ENCODE measurements at regions of chr2 and their contacts with region 1.

Region 1: DNA sequence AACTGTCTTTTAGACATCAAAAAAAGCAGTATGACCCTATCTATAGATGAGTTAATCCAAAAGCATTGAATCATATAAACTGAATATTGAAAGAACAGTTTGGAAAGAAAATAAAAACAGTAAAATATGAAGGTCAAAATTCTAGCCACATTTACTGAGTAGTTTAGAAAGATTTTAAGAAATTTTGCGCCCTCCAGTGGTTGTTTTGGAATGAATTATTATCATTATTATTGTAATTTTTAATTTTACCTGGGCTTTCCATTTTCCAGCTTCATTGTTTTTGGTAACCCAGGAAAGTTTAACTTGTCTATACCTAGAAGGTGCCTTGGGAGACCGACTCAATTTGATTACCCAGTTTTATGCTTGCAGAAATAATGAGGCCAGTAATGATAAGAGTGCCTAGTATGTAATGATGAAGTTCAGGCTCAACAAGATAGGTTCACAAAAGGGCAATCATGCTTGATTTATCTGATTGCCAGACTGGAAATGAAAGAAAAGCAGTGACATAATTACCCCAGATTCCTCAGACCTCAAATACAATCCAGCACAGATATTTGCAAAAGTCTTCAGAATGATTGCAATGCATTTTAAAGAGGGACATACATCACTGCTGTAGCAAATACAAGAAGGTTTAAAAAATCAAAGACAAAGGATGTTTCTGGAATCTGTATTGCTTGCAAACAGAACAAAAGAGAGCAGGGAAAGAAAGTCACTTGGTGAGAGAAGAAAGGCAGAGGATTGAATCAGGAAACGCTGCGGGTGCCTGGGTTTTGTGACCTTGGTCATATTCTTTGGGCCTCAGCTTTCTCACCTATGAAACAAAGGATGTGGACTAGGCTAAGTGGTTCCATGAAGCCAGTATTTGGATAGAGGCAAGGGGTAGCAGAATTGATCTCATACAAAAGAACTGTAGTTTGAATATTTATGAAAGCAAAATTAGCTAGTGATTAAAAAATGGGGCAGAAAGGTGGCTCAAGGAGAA is 153.8 kb downstream of the MAP2 start:
- DNase-seq: no peak
- H3K4me3 ChIP-seq: no peak overlapping the region
- H3K4me3 Mint-ChIP-seq: no peak overlapping the region
- H3K27ac ChIP-seq: no peak overlapping the region
- H3K27ac Mint-ChIP-seq: no peak overlapping the region
- H3K4me1 ChIP-seq: no peaks in the 10 kb centered on the region
- H3K4me1 Mint-ChIP-seq: peaks cover 8% of the 10 kb centered on the region
- H3K27me3 ChIP-seq: no peaks in the 10 kb centered on the region
- H3K27me3 Mint-ChIP-seq: peaks cover 1 to 8% (median 4%) of the 10 kb centered on the region in 3 donors
- CTCF ChIP-seq: peak; percentile 72

Region 2: GRCh38 chr2:209334198-209335017 is 243.3 kb before region 1 on chr2:
- intact Hi-C with region 1: loop called in 1 of 2 experiments (anchors 10 kb)
- DNase-seq: peak in 2 of 3 donors; percentile 13 to 23
- H3K4me3 ChIP-seq: no peak overlapping the region
- H3K4me3 Mint-ChIP-seq: no peak overlapping the region
- H3K27ac ChIP-seq: no peak overlapping the region
- H3K27ac Mint-ChIP-seq: no peak overlapping the region
- H3K4me1 ChIP-seq: no peaks in the 10 kb centered on the region
- H3K4me1 Mint-ChIP-seq: no peaks in the 10 kb centered on the region
- H3K27me3 ChIP-seq: peaks cover 0 to 2% of the 10 kb centered on the region in 2 donors
- H3K27me3 Mint-ChIP-seq: peaks cover 0 to 9% (median 8%) of the 10 kb centered on the region in 3 donors
- CTCF ChIP-seq: peak; percentile 87

Region 3: DNA sequence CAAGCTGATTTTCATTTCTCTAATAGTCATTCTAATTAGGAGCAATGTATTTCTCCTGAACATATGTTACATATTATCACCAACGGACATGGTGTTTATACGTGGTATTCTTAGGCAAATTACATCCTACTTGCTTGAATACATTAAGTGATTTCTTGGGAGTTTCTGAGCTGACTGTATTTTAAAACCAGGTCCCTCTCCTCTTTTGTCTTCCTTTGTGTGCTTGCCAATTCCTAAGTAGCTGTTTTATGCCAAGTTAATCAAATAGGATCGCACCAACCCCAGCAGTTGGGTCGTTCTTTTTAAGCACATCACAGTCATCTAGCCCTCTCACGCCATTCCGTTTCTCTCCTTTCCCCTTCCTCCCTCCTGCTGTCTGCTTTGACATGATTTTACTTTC is 229.2 kb before region 1 on chr2:
- intact Hi-C with region 1: loop called in 1 of 2 experiments (anchors 10 kb)
- DNase-seq: no peak
- H3K4me3 ChIP-seq: no peak overlapping the region
- H3K4me3 Mint-ChIP-seq: no peak overlapping the region
- H3K27ac ChIP-seq: no peak overlapping the region
- H3K27ac Mint-ChIP-seq: no peak overlapping the region
- H3K4me1 ChIP-seq: no peaks in the 10 kb centered on the region
- H3K4me1 Mint-ChIP-seq: no peaks in the 10 kb centered on the region
- H3K27me3 ChIP-seq: no peaks in the 10 kb centered on the region
- H3K27me3 Mint-ChIP-seq: peaks cover 0 to 6% (median 0%) of the 10 kb centered on the region in 3 donors
- CTCF ChIP-seq: no peak

Measured in CD14-positive monocyte (primary cell).